MCF 10A (cell line): ENCODE measurements at regions of chr2 and their contacts with region 1.

Region 1: DNA sequence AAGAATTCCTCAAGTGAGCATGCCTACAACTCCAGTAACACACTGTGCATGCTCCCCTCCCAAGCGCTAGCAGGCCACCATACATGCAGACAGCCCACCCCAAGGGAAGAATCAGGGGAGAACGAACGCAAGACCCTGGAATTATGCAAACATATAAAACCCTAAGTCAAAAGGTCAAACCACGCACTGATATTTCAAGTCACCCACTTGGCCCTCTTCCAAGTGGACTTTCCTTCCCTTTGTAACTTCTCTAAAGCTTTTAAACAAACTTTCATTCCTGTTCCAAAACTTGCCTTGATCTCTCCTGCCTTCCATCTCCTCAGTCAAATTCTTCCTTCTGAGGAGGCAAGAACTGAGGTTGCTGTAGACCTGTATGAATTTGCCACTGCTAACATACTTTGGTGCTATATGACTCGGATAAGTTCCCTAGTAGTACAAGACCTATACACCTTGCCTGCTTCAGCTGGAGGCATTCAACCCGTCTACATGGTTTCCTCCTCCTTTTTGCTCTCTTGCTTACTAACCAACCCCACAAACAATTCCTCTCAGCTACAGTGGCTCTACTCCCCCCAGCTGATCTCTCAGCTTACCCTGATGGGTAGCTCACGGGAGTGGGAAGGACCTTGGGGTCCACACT is 11.1 kb upstream of the RPIA start:
- DNase-seq: no peak
- H3K4me3 Mint-ChIP-seq: no peak overlapping the region
- H3K27ac Mint-ChIP-seq: no peak overlapping the region
- H3K4me1 Mint-ChIP-seq: no peaks in the 10 kb centered on the region
- H3K27me3 Mint-ChIP-seq: peaks cover 14% of the 10 kb centered on the region
- CTCF ChIP-seq: no peak

Region 2: DNA sequence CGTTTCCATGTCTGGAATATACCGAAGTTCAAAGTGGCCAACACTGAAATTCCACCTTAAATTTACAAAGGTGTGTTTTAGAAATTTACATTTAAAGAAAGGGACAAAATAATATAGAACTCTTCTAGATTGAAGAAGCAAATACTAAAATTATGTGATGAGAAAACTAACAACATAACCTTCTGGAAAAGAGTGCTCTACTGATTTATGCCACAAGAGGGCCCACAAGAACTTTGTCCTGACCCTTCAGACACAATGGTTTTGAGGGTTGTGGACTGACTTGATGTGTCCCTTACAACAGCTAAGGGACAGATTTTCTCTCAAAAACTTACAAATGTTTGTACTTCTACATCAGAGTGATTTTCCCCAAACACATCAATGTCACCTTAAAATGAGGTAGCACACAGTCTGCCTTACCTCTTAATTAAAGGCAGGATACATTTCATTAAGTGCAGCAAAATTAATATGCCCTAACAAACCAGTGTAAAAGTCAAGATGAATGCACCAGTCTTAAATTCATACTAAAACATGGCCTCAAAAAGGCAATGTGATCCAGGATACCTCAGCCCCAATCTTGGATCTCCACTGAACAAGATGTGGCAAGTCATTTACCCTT is 89.3 kb before region 1 on chr2:
- CTCF ChIA-PET with region 1: interaction called, 424 read pairs
- POLR2A ChIA-PET with region 1: no interaction called
- intact Hi-C with region 1: no loop called
- DNase-seq: peak; percentile 73
- H3K4me3 Mint-ChIP-seq: no peak overlapping the region
- H3K27ac Mint-ChIP-seq: no peak overlapping the region
- H3K4me1 Mint-ChIP-seq: no peaks in the 10 kb centered on the region
- H3K27me3 Mint-ChIP-seq: no peaks in the 10 kb centered on the region
- CTCF ChIP-seq: peak; percentile 58